ENCODE measurements at regions of chr2 and their contacts with region 1.

Region 1: DNA sequence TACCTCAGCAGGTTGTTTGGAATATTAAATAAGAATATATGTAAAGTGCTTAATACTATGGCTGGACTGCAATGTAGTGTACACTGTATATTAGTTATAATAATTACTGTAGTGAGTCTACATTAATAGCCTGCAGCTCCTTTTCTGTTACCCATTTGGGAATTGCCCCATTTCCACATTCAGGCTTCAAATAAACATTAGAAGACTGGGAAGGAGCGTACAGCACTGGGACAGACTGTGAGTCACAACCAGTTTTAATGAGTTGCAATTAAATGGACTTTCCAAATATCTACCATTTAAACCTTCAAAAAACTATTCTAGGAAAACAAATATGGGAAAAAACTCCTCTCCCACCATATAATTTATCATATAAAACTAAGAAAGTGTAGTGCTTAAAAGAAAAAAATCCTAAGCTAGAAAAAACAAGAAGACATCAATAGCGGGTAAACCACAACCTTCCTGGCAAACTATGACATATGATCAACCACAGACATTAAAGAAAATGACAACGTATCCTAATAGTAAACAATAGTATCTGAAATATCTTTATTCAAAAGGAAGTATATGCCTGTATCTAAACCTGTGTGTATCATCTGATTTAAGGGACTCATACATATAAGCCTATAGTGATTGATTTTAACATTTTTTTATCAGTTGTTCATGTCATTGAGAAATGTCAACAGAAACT is 86.1 kb downstream of the TRIP12 start:
- DNase-seq: peak in 7 of 9 donors; percentile 47 to 83 (median 75)
- ATAC-seq: peak; percentile 92
- H3K4me3 ChIP-seq: peak overlapping the region; percentile 17
- H3K4me3 Mint-ChIP-seq: peak overlapping the region; percentile 39 to 79 (median 68)
- H3K27ac ChIP-seq: peak overlapping the region; percentile 21
- H3K27ac Mint-ChIP-seq: peak overlapping the region; percentile 2 to 97 (median 90)
- H3K4me1 ChIP-seq: peaks cover 18 to 45% of the 10 kb centered on the region in 2 donors
- H3K4me1 Mint-ChIP-seq: peaks cover 23 to 84% (median 78%) of the 10 kb centered on the region in 7 donors
- H3K27me3 ChIP-seq: no peaks in the 10 kb centered on the region
- H3K27me3 Mint-ChIP-seq: no peaks in the 10 kb centered on the region

Region 2: GRCh38 chr2:229445019-229445418 is 390.7 kb before region 1 on chr2:
- CTCF ChIA-PET with region 1: no interaction called
- POLR2A ChIA-PET with region 1: no interaction called
- intact Hi-C with region 1: no loop called
- DNase-seq: no peak
- ATAC-seq: no peak
- H3K4me3 ChIP-seq: no peak overlapping the region
- H3K4me3 Mint-ChIP-seq: no peak overlapping the region
- H3K27ac ChIP-seq: no peak overlapping the region
- H3K27ac Mint-ChIP-seq: no peak overlapping the region
- H3K4me1 ChIP-seq: no peaks in the 10 kb centered on the region
- H3K4me1 Mint-ChIP-seq: peaks cover 0 to 2% (median 0%) of the 10 kb centered on the region in 7 donors
- H3K27me3 ChIP-seq: no peaks in the 10 kb centered on the region
- H3K27me3 Mint-ChIP-seq: peaks cover 0 to 12% (median 10%) of the 10 kb centered on the region in 5 donors

Region 3: GRCh38 chr2:229489016-229489415 is 346.7 kb before region 1 on chr2:
- CTCF ChIA-PET with region 1: no interaction called
- POLR2A ChIA-PET with region 1: no interaction called
- intact Hi-C with region 1: no loop called
- DNase-seq: no peak
- ATAC-seq: no peak
- H3K4me3 ChIP-seq: no peak overlapping the region
- H3K4me3 Mint-ChIP-seq: no peak overlapping the region
- H3K27ac ChIP-seq: no peak overlapping the region
- H3K27ac Mint-ChIP-seq: no peak overlapping the region
- H3K4me1 ChIP-seq: no peaks in the 10 kb centered on the region
- H3K4me1 Mint-ChIP-seq: no peaks in the 10 kb centered on the region
- H3K27me3 ChIP-seq: peaks cover 0 to 3% of the 10 kb centered on the region in 2 donors
- H3K27me3 Mint-ChIP-seq: peaks cover 0 to 30% (median 4%) of the 10 kb centered on the region in 5 donors

Region 4: GRCh38 chr2:229825476-229825875 is 10.3 kb before region 1 on chr2:
- CTCF ChIA-PET with region 1: no interaction called
- POLR2A ChIA-PET with region 1: interaction called, 4 read pairs
- intact Hi-C with region 1: loop called (anchors 1 kb)
- DNase-seq: no peak
- ATAC-seq: no peak
- H3K4me3 ChIP-seq: no peak overlapping the region
- H3K4me3 Mint-ChIP-seq: no peak overlapping the region
- H3K27ac ChIP-seq: no peak overlapping the region
- H3K27ac Mint-ChIP-seq: peak overlapping the region in 5 of 9 donors; percentile 12 to 74 (median 40)
- H3K4me1 ChIP-seq: no peaks in the 10 kb centered on the region
- H3K4me1 Mint-ChIP-seq: peaks cover 8 to 23% (median 18%) of the 10 kb centered on the region in 7 donors
- H3K27me3 ChIP-seq: no peaks in the 10 kb centered on the region
- H3K27me3 Mint-ChIP-seq: no peaks in the 10 kb centered on the region

Region 5: DNA sequence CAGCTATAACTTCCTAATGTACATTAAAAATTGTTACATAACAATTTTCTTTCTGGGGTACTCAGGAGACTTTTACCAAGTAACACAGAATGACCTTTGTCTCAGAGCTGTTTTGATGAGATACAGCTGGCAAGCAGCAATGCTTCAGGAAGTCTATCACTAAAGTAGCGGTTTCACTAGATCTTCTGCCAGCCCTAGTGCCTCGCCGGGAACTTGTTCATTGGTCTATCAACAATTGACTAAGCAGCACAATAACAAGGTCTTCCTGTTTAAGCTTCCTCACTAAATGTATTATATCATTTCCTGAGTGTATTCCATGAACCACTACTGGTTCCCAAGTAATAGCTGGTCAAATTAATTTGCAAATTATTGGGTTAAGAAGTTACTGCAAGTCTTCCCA is 16.8 kb after region 1 on chr2:
- CTCF ChIA-PET with region 1: interaction called, 10 read pairs
- POLR2A ChIA-PET with region 1: interaction called, 13 read pairs
- intact Hi-C with region 1: loop called in 1 of 2 experiments (anchors 1 kb)
- DNase-seq: peak in 7 of 9 donors; percentile 45 to 70 (median 58)
- ATAC-seq: peak; percentile 91
- H3K4me3 ChIP-seq: no peak overlapping the region
- H3K4me3 Mint-ChIP-seq: peak overlapping the region in 9 of 10 donors; percentile 14 to 64 (median 27)
- H3K27ac ChIP-seq: peak overlapping the region; percentile 53
- H3K27ac Mint-ChIP-seq: peak overlapping the region; percentile 51 to 96 (median 86)
- H3K4me1 ChIP-seq: peaks cover 25 to 37% of the 10 kb centered on the region in 2 donors
- H3K4me1 Mint-ChIP-seq: peaks cover 30 to 92% (median 73%) of the 10 kb centered on the region in 7 donors
- H3K27me3 ChIP-seq: no peaks in the 10 kb centered on the region
- H3K27me3 Mint-ChIP-seq: no peaks in the 10 kb centered on the region

Region 6: GRCh38 chr2:229873123-229873581 is 37.4 kb after region 1 on chr2:
- CTCF ChIA-PET with region 1: no interaction called
- POLR2A ChIA-PET with region 1: no interaction called
- intact Hi-C with region 1: loop called in 1 of 2 experiments (anchors 1 kb)
- DNase-seq: no peak
- ATAC-seq: no peak
- H3K4me3 ChIP-seq: no peak overlapping the region
- H3K4me3 Mint-ChIP-seq: peak overlapping the region in 7 of 10 donors; percentile 0 to 49 (median 26)
- H3K27ac ChIP-seq: no peak overlapping the region
- H3K27ac Mint-ChIP-seq: peak overlapping the region in 7 of 9 donors; percentile 21 to 73 (median 45)
- H3K4me1 ChIP-seq: peaks cover 4% of the 10 kb centered on the region in 2 donors
- H3K4me1 Mint-ChIP-seq: peaks cover 33 to 78% (median 69%) of the 10 kb centered on the region in 7 donors
- H3K27me3 ChIP-seq: no peaks in the 10 kb centered on the region
- H3K27me3 Mint-ChIP-seq: no peaks in the 10 kb centered on the region